Caco-2 (cell line): ENCODE measurements at regions of chr2 and their contacts with region 1.

Region 1: DNA sequence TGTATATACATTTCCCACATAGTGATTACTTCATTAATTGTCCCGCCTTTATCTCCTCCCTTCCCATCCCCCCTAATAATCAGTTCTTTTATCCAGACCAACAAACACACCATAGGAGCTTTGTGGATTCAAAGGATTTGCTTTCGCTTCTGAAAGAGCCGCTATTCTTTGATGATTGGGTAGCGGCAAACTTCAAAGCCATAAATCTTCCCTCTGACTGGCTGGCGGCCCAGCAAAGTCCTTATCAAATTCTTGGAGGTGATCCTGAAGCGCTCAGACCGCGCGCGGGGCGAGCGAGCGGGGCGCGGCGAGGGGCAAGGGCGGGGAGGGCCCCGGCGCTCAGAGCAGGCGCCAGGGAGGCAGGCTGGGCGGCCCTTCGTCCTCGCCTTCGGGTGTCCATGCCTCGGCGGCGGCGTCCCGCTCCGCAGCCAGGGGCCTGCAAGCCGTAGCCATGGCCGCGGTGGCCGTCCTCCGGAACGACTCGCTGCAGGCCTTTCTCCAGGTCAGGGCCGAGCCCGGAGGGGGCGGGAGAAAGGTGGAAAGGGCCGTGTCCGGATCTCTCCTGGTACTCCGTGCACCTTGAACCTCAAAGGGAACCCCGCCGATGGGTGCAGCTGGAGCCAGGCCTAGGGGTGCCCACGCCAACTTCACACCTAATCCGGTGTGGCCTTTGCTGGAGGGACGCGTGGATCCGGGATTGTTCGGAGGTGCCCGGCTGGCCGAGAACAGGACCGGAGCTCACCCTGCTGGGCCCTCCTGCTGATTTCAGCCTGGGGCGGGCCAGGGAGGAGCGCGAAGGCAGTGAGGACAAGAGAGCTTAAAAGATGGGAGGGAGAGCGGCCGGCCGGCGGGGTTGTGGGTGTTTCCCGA is at the start of gene SP5:
- DNase-seq: peak; percentile 95
- H3K4me3 ChIP-seq: peak within 1 kb of the TSS; percentile 62
- H3K4me3 Mint-ChIP-seq: peak within 1 kb of the TSS; percentile 100
- H3K27ac Mint-ChIP-seq: peak within 1 kb of the TSS; percentile 84
- H3K4me1 ChIP-seq: peaks cover 15% of the 10 kb centered on the region; the same call in 1 of the 2 replicates
- H3K4me1 Mint-ChIP-seq: peaks cover 6% of the 10 kb centered on the region
- H3K27me3 ChIP-seq: no peaks in the 10 kb centered on the region
- H3K27me3 Mint-ChIP-seq: no peaks in the 10 kb centered on the region
- CTCF ChIP-seq: peak in 1 of 2 experiments; percentile 14
- total RNA-seq, gene SP5: 149 and 161 TPM in 2 replicates

Region 2: DNA sequence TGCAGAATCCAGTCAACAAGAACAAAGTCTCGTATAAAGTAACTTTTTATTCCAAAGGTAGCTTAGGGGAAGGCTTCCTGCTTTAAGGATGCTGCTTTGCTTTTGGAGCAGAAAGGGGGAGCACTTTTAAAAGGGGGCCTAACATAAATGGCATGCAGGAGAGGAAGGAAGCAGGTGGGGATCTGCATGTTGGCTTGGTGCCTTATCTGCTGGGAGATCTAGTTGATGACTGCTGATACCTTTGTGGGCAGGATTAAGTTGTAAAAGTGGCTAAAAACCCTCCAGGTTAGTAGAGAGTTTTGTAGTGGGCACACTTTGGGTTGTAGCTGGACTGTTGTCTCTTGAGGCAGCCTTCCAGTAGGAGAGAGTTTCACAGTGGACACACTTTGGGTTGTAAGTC is 865.6 kb before region 1 on chr2:
- CTCF ChIA-PET with region 1: no interaction called
- POLR2A ChIA-PET with region 1: no interaction called
- intact Hi-C with region 1: no loop called
- DNase-seq: no peak
- H3K4me3 ChIP-seq: no peak overlapping the region
- H3K4me3 Mint-ChIP-seq: no peak overlapping the region
- H3K27ac Mint-ChIP-seq: no peak overlapping the region
- H3K4me1 ChIP-seq: no peaks in the 10 kb centered on the region
- H3K4me1 Mint-ChIP-seq: no peaks in the 10 kb centered on the region
- H3K27me3 ChIP-seq: no peaks in the 10 kb centered on the region
- H3K27me3 Mint-ChIP-seq: no peaks in the 10 kb centered on the region
- CTCF ChIP-seq: no peak

Region 3: DNA sequence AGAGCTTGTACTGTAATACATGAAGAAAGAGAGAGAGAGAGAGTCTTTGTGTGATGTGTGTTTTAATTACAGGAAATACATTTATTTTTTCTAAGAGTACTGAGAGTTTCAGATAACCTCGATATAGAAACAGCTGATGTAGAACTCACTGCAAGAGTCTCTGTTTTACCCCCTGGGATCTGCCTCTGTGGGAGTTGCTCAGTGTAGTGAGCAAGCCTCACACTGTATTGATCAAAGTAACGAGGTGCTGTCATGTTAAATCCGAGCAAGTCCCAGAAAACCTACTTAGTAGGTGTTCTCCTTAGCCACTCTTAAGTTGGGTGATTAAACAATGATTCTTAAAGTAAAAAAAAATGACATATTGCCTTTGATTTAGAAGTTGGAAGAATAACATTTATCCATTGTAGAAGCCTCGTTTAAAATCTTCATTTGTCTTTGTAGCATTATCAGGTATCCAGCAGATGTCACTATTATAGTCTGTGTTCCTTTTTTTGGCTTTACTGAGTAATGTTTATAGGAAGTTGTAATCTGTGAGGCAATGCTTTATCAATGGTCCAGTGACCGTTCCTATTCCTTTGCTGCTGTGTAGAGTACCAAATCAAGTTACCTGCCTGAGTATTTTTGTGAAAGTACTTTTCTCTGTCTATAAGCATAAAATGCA is 318.4 kb before region 1 on chr2:
- CTCF ChIA-PET with region 1: no interaction called
- POLR2A ChIA-PET with region 1: no interaction called
- intact Hi-C with region 1: loop called (anchors 2 kb)
- DNase-seq: peak in 1 of 2 experiments; percentile 15
- H3K4me3 ChIP-seq: no peak overlapping the region
- H3K4me3 Mint-ChIP-seq: no peak overlapping the region
- H3K27ac Mint-ChIP-seq: no peak overlapping the region
- H3K4me1 ChIP-seq: peaks cover 12% of the 10 kb centered on the region; the same call in 1 of the 2 replicates
- H3K4me1 Mint-ChIP-seq: peaks cover 8% of the 10 kb centered on the region
- H3K27me3 ChIP-seq: no peaks in the 10 kb centered on the region
- H3K27me3 Mint-ChIP-seq: no peaks in the 10 kb centered on the region
- CTCF ChIP-seq: peak; percentile 5 to 60

Region 4: DNA sequence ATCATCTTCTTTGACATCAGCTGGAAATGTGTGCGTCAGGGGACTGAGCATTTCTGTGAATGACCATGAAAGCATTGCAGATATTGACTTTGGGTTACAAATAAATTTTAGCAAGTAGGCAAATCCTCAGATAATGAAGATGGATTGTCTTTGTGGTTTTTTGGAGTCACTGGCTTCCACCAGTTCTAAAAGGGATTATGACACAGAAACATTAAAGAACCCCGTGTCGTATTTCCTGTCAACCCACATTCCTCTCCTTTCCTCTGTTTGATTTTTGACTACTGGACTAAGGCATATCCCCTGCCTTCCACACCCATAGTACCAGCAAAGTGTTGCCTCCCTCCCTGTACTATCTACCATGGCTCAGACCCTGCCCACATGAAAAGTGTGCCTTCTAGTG is 269.2 kb before region 1 on chr2:
- CTCF ChIA-PET with region 1: no interaction called
- POLR2A ChIA-PET with region 1: no interaction called
- intact Hi-C with region 1: loop called (anchors 5 kb)
- DNase-seq: peak; percentile 49 to 83
- H3K4me3 ChIP-seq: no peak overlapping the region
- H3K4me3 Mint-ChIP-seq: peak overlapping the region; percentile 23
- H3K27ac Mint-ChIP-seq: peak overlapping the region; percentile 65
- H3K4me1 ChIP-seq: peaks cover 67% of the 10 kb centered on the region
- H3K4me1 Mint-ChIP-seq: peaks cover 42% of the 10 kb centered on the region
- H3K27me3 ChIP-seq: no peaks in the 10 kb centered on the region
- H3K27me3 Mint-ChIP-seq: no peaks in the 10 kb centered on the region
- CTCF ChIP-seq: no peak

Region 5: GRCh38 chr2:170461884-170462283 is 253.4 kb before region 1 on chr2:
- CTCF ChIA-PET with region 1: interaction called, 7 read pairs
- POLR2A ChIA-PET with region 1: no interaction called
- intact Hi-C with region 1: loop called (anchors 1 kb)
- DNase-seq: no peak
- H3K4me3 ChIP-seq: no peak overlapping the region
- H3K4me3 Mint-ChIP-seq: no peak overlapping the region
- H3K27ac Mint-ChIP-seq: peak overlapping the region; percentile 14
- H3K4me1 ChIP-seq: peaks cover 3% of the 10 kb centered on the region
- H3K4me1 Mint-ChIP-seq: peaks cover 15% of the 10 kb centered on the region
- H3K27me3 ChIP-seq: no peaks in the 10 kb centered on the region
- H3K27me3 Mint-ChIP-seq: no peaks in the 10 kb centered on the region
- CTCF ChIP-seq: peak; percentile 19 to 25

Region 6: GRCh38 chr2:170576296-170576695 is 139.0 kb before region 1 on chr2:
- CTCF ChIA-PET with region 1: no interaction called
- POLR2A ChIA-PET with region 1: no interaction called
- intact Hi-C with region 1: loop called (anchors 5 kb)
- DNase-seq: no peak
- H3K4me3 ChIP-seq: no peak overlapping the region
- H3K4me3 Mint-ChIP-seq: no peak overlapping the region
- H3K27ac Mint-ChIP-seq: no peak overlapping the region
- H3K4me1 ChIP-seq: peaks cover 4% of the 10 kb centered on the region; the same call in 1 of the 2 replicates
- H3K4me1 Mint-ChIP-seq: no peaks in the 10 kb centered on the region
- H3K27me3 ChIP-seq: no peaks in the 10 kb centered on the region
- H3K27me3 Mint-ChIP-seq: peaks cover 3% of the 10 kb centered on the region
- CTCF ChIP-seq: no peak

Region 7: GRCh38 chr2:170598067-170598395 is 117.3 kb before region 1 on chr2:
- CTCF ChIA-PET with region 1: no interaction called
- POLR2A ChIA-PET with region 1: no interaction called
- intact Hi-C with region 1: no loop called
- DNase-seq: no peak
- H3K4me3 ChIP-seq: no peak overlapping the region
- H3K4me3 Mint-ChIP-seq: no peak overlapping the region
- H3K27ac Mint-ChIP-seq: no peak overlapping the region
- H3K4me1 ChIP-seq: no peaks in the 10 kb centered on the region
- H3K4me1 Mint-ChIP-seq: no peaks in the 10 kb centered on the region
- H3K27me3 ChIP-seq: no peaks in the 10 kb centered on the region
- H3K27me3 Mint-ChIP-seq: peaks cover 3% of the 10 kb centered on the region
- CTCF ChIP-seq: no peak

Region 8: DNA sequence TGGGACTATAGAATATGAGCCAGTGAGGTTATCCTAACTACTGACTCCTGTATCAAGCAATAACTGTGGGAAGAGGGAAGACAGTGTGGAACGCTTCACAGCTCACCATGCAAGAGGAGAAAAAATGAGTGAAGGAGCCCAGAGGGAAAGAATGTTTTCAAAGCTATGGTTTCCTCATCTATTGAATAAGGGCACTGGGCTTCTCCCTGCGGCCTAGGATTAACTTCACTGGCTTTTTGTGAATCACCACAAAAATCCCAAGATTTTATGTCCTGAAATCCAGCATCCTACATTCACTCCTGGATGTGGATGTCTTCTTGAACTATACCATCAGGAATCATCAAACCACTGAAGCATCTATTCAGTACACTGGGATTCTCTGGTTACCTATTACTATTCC is 44.6 kb before region 1 on chr2:
- CTCF ChIA-PET with region 1: no interaction called
- POLR2A ChIA-PET with region 1: no interaction called
- intact Hi-C with region 1: no loop called
- DNase-seq: no peak
- H3K4me3 ChIP-seq: no peak overlapping the region
- H3K4me3 Mint-ChIP-seq: no peak overlapping the region
- H3K27ac Mint-ChIP-seq: no peak overlapping the region
- H3K4me1 ChIP-seq: no peaks in the 10 kb centered on the region
- H3K4me1 Mint-ChIP-seq: peaks cover 6% of the 10 kb centered on the region
- H3K27me3 ChIP-seq: no peaks in the 10 kb centered on the region
- H3K27me3 Mint-ChIP-seq: no peaks in the 10 kb centered on the region
- CTCF ChIP-seq: no peak

Region 9: DNA sequence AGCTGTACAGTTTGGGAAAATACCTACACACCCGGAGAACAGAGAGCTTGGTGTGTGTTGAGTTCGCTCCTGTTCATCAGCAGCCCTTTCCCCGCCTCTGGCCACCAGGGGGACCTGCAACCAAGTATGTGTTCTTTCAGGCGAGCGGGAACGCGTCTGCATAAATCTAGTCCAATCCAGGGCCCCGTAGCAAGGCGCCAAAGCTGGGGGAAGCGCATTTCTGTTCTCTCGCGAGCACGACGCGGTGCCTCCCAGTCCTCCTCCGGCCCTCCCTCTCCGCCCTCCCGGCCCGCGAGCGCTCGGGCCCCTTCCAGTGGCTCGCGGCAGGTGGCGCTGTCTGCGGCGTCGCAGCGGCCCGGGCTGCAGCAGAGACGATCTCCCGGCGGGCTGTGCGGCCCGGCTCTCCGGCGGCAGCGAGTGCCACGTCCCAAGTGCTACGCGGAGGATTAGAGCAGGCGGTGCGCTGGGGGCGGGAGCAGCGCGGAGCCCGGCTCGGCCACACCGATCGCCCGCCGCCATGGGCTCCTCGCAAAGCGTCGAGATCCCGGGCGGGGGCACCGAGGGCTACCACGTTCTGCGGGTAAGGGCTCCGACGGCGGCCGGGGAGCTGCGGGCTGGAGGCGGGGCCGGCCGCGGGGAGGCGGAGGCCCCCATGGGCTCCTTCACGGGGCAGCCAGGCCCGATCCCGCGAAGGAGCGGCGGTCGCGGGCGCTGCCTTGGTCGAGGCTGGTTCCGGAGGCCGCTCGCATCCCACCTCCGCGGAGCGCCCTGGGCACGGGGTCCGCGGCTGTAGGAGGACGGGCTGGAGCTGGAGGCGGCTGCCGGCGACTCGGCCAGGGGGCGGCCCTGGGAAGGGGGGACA is 213.8 kb after region 1 on chr2 and contains the start of gene GORASP2:
- CTCF ChIA-PET with region 1: no interaction called
- POLR2A ChIA-PET with region 1: no interaction called
- intact Hi-C with region 1: loop called (anchors 5 kb)
- DNase-seq: peak; percentile 98 to 100
- H3K4me3 ChIP-seq: peak within 1 kb of the TSS; percentile 98
- H3K4me3 Mint-ChIP-seq: peak within 1 kb of the TSS; percentile 98
- H3K27ac Mint-ChIP-seq: peak within 1 kb of the TSS; percentile 99
- H3K4me1 ChIP-seq: peaks cover 21% of the 10 kb centered on the region
- H3K4me1 Mint-ChIP-seq: peaks cover 29% of the 10 kb centered on the region
- H3K27me3 ChIP-seq: no peaks in the 10 kb centered on the region
- H3K27me3 Mint-ChIP-seq: no peaks in the 10 kb centered on the region
- CTCF ChIP-seq: peak; percentile 87 to 91
- total RNA-seq, gene GORASP2: 124 and 143 TPM in 2 replicates

Region 10: GRCh38 chr2:171271971-171272436 is 556.7 kb after region 1 on chr2:
- CTCF ChIA-PET with region 1: no interaction called
- POLR2A ChIA-PET with region 1: no interaction called
- intact Hi-C with region 1: no loop called
- DNase-seq: peak; percentile 65 to 70
- H3K4me3 ChIP-seq: no peak overlapping the region
- H3K4me3 Mint-ChIP-seq: no peak overlapping the region
- H3K27ac Mint-ChIP-seq: peak overlapping the region; percentile 54
- H3K4me1 ChIP-seq: peaks cover 15% of the 10 kb centered on the region
- H3K4me1 Mint-ChIP-seq: peaks cover 10% of the 10 kb centered on the region
- H3K27me3 ChIP-seq: no peaks in the 10 kb centered on the region
- H3K27me3 Mint-ChIP-seq: no peaks in the 10 kb centered on the region
- CTCF ChIP-seq: no peak